Caco-2 (cell line): ENCODE measurements at regions of chr1 and their contacts with region 1.

Region 1: GRCh38 chr1:23825076-23825761 is at the start of gene HMGCL:
- DNase-seq: peak; percentile 83 to 85
- H3K4me3 ChIP-seq: peak within 1 kb of the TSS; percentile 76
- H3K4me3 Mint-ChIP-seq: peak within 1 kb of the TSS; percentile 85
- H3K27ac Mint-ChIP-seq: peak within 1 kb of the TSS; percentile 88
- H3K4me1 ChIP-seq: no peaks in the 10 kb centered on the region
- H3K4me1 Mint-ChIP-seq: no peaks in the 10 kb centered on the region
- H3K27me3 ChIP-seq: no peaks in the 10 kb centered on the region
- H3K27me3 Mint-ChIP-seq: no peaks in the 10 kb centered on the region
- CTCF ChIP-seq: no peak
- total RNA-seq, gene HMGCL: 18.3 and 19.4 TPM in 2 replicates

Region 2: DNA sequence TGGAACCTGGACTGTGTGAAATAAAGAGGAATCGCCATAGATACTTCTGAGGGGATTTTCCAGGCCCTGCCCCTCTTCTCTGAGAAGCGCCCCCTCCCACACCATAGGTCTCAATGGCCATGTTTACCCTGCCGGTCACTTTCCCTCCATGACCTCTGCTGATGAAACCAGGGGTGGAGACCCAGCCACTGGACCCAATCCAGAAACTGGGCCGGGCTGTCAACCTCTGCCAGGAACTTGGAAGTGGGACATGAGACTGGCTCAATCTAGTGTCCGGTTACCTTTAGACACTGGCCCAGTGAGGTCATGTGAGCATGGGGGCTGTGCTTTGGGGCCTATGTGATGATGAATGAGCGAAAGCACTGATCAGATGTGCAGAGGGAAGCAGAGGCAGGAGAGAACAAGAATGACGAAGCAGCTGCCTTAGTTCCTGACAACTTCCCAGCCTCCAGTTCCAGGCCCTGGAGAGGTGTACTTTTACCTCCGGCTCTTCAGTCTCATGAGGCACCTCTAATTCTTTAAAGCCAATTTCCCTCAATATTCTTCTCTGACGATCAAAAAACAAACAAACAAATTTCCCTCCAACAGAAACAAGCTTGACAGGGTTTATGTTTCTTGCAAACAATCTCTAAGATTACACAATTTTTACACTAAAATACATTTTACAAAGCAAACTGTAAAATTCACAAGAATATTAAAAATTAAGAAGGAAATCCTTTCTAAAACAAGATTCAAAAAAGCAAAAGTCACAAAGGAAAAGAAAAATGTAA is 346.1 kb before region 1 on chr1:
- CTCF ChIA-PET with region 1: no interaction called
- POLR2A ChIA-PET with region 1: no interaction called
- intact Hi-C with region 1: no loop called
- DNase-seq: peak; percentile 16 to 38
- H3K4me3 ChIP-seq: no peak overlapping the region
- H3K4me3 Mint-ChIP-seq: no peak overlapping the region
- H3K27ac Mint-ChIP-seq: no peak overlapping the region
- H3K4me1 ChIP-seq: no peaks in the 10 kb centered on the region; the same call in 1 of the 2 replicates
- H3K4me1 Mint-ChIP-seq: peaks cover 8% of the 10 kb centered on the region
- H3K27me3 ChIP-seq: no peaks in the 10 kb centered on the region
- H3K27me3 Mint-ChIP-seq: no peaks in the 10 kb centered on the region
- CTCF ChIP-seq: no peak

Region 3: DNA sequence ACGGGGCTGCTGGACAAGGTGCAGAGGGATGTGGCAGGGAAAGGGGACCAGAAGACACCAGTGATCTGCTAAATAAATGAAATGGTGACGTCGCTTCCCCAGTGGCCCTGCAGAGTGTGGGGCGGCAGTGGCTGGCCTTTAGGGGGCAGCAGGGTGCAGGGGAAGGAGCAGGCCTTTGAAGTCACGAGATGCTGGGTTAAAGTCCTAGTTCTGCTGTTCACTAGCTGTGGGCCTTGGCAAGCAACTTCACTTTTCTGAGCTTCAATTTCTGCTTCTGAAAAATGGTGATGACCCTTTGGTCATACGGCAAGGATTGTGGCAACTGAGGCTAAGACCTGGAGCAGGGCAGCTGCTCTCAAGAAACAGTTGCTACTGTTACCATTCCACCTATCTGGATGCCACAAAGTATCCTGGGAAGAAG is 15.5 kb before region 1 on chr1:
- CTCF ChIA-PET with region 1: interaction called, 3 read pairs
- POLR2A ChIA-PET with region 1: interaction called, 3 read pairs
- intact Hi-C with region 1: loop called (anchors 1 kb)
- DNase-seq: peak; percentile 76 to 82
- H3K4me3 ChIP-seq: no peak overlapping the region
- H3K4me3 Mint-ChIP-seq: no peak overlapping the region
- H3K27ac Mint-ChIP-seq: no peak overlapping the region
- H3K4me1 ChIP-seq: no peaks in the 10 kb centered on the region
- H3K4me1 Mint-ChIP-seq: no peaks in the 10 kb centered on the region
- H3K27me3 ChIP-seq: no peaks in the 10 kb centered on the region
- H3K27me3 Mint-ChIP-seq: no peaks in the 10 kb centered on the region
- CTCF ChIP-seq: peak; percentile 57 to 77

Region 4: DNA sequence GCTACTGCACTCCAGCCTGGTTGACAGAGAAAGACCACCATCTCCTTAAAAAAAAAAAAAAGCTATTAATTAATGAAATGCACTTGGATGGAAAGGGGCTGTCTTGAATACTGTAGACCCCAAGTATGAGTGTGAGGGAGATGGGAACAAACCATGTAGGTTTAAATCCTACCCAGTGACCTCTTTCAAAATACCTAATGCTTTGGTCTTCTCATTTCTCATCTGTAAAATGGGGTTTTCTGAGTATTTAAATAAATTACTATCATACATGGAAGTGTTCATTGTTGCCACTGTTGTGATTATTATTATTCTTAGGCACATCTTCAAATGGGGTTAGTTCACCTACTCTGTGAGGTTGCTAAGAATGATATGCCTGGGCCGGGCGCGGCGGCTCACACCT is 60.0 kb after region 1 on chr1:
- CTCF ChIA-PET with region 1: no interaction called
- POLR2A ChIA-PET with region 1: interaction called, 11 read pairs
- intact Hi-C with region 1: no loop called
- DNase-seq: no peak
- H3K4me3 ChIP-seq: no peak overlapping the region
- H3K4me3 Mint-ChIP-seq: no peak overlapping the region
- H3K27ac Mint-ChIP-seq: no peak overlapping the region
- H3K4me1 ChIP-seq: no peaks in the 10 kb centered on the region
- H3K4me1 Mint-ChIP-seq: no peaks in the 10 kb centered on the region
- H3K27me3 ChIP-seq: no peaks in the 10 kb centered on the region
- H3K27me3 Mint-ChIP-seq: no peaks in the 10 kb centered on the region
- CTCF ChIP-seq: no peak

Region 5: DNA sequence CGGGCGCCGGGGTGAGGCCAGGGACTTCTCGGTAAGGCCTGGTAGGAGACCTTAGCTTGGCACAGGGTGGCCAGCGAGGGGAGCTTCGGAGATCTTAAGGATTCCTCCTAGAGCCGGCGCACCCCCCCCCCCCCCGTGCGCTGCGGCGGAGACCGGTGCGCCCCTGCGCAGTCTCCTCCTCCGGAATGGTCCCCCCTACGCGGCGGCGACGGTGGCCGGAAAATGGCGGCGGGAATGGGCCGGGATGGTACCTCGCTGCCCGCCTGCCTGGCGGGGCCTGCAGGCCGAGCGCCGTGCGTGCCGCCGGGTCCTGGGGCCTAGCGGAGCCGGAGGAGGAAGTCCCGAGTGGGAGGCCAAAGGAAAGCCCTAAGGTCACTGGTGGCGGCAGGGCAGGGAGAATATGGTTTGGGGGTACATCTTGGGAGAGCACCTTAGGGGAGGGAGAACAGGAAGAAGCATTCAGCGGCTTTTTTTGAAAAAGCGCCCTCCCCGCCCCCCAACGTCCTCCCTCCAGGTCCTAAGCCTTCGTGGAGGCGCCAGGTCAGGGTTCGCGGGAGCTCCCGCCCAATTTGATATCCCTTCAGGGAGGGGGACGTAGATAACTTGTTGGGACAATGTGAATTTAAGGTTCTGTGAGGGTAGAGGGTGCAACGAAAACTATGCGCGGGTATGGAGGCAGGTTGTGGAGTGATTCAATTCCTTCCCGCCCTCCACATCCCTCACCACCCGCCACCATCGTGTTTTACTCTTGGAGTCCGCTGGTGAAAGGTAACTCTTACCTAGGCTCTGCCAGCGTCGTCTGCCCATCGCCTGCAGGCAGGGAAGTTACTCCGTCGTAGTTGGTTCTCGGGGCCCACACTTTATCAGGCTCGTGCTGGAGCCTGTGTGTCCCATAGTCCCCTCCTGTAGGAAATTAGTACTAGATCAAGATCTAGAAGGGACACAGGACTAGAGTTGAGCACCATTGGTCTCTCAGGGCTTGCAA is 818.4 kb after region 1 on chr1:
- CTCF ChIA-PET with region 1: no interaction called
- POLR2A ChIA-PET with region 1: interaction called, 10 read pairs
- intact Hi-C with region 1: no loop called
- DNase-seq: peak; percentile 26 to 41
- H3K4me3 ChIP-seq: peak overlapping the region; percentile 94
- H3K4me3 Mint-ChIP-seq: peak overlapping the region; percentile 74
- H3K27ac Mint-ChIP-seq: peak overlapping the region; percentile 88
- H3K4me1 ChIP-seq: peaks cover 12% of the 10 kb centered on the region
- H3K4me1 Mint-ChIP-seq: peaks cover 18% of the 10 kb centered on the region
- H3K27me3 ChIP-seq: no peaks in the 10 kb centered on the region
- H3K27me3 Mint-ChIP-seq: no peaks in the 10 kb centered on the region
- CTCF ChIP-seq: no peak